Posterior vena cava (tissue), 2 donors: ENCODE measurements at regions of chr9 and their contacts with region 1.

Region 1: DNA sequence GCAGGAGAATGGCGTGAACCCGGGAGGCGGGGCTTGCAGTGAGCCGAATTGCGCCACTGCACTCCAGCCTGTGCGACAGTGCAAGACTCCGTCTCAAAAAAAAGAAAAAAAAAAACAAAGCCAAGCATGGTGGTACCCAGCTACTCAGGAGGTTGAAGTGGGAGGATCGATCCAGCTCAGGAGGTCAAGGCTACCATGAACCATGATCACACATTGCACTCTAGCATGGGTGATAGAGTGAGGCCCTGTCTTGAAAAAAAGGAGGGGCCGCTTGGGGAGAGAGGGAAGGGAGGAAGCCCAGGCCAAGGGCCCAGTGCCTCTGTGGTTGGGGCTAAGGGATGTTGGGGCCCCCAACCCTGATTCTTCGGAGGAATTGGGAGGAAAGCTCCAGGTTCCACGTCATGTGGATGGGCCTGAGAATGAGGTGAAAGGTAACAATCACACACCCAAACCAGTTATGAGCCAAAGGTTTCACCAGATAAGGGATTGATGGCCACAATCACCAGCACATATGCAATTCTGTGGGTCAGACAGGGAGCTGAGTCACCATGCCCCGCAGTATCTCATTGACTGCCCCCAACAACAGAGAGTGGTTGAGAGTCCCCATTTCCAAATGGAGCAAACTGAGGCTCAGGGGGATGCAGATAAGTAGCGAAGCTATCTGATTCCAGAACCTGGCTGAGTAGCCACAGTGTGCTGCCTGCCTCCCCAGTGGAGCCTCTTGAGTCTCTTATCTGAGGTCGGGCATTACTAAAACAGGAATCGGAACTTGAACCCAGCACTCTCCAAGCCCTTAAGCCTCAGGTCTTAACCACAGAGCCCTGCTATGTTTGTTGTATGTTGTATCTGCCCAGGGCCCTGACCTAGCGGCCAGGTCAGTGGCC is 20.5 kb downstream of the SWI5 start:
- DNase-seq: no peak

Region 2: GRCh38 chr9:128280084-128280622 is 16.4 kb before region 1 on chr9:
- intact Hi-C with region 1: loop called in 1 of 2 experiments (anchors 2 kb)
- DNase-seq: no peak

Region 3: DNA sequence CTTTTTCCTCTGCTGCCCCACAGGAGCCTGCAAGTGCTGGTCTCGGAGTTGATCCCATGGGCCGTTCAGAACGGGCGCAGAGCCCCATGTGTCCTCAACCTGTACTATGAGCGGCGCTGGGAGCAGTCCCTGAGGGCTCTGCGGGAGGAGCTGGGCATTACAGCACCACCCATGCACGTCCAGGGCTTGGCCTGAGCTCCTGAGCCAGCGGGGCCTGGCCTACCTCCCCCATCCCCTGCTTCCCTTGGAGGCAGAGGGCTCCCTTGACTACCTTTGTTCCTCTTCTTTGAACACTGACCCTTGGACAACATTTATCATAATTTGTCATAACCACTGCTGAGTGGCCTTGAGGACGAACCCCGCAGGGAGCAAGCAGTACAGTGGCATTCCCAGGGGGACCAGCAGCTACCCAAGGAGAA is 36.9 kb after region 1 on chr9:
- intact Hi-C with region 1: loop called in 1 of 2 experiments (anchors 1 kb)
- DNase-seq: no peak